ENCODE measurements at regions of chr13 and their contacts with region 1.

Region 1: DNA sequence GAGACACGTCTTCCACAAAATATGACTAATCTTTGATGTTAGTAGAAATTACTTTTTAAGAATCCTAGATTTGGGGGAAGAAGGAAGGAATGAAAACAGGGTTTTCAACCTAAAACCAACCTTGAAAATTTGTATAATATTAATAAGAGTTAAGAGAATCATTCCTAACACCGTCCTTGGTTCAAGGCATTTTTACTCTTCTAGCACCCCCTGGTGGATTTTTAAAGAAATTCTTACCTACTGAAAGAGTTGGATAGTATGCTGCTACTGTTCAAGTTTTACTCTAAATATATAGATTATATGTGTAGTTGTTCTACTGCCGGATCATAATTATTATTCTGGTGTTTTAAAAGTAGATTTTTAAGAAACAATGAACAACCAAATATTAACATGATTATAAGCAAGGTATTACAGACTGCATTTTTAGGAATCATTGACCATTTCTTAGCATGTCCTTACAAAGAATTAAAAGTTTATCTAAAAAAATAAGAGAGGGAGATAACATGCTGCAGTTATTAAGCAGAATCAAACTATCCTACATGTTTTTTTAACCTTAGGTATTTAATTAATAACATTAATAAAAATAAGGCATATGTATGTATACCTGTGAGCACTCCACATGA is 7.4 kb upstream of the SLITRK6 start:
- DNase-seq: no peak
- ATAC-seq: no peak

Region 2: DNA sequence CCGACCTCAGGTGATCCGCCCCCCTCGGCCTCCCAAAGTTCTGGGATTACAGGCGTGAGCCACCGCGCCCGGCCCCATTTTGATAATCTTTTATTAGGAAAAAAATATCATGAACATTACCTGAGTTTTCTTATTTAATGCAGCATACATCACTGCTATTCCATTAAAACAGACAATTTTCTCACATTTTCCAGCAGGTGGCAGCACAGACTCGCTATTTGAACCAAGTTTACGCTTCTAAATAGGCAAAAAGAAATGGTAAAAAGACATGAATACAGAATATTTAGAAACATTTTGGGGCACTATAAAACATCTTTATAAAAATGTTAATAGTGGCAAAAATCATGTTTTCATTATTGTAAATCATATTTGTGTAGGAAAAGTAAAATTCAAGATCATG is 910.5 kb before region 1 on chr13:
- intact Hi-C with region 1: loop called (anchors 5 kb)
- DNase-seq: no peak
- ATAC-seq: no peak

Region 3: GRCh38 chr13:84917252-84917878 is 889.3 kb before region 1 on chr13:
- intact Hi-C with region 1: loop called (anchors 5 kb)
- DNase-seq: no peak
- ATAC-seq: no peak